ENCODE measurements at regions of chr5 and their contacts with region 1.

Region 1: DNA sequence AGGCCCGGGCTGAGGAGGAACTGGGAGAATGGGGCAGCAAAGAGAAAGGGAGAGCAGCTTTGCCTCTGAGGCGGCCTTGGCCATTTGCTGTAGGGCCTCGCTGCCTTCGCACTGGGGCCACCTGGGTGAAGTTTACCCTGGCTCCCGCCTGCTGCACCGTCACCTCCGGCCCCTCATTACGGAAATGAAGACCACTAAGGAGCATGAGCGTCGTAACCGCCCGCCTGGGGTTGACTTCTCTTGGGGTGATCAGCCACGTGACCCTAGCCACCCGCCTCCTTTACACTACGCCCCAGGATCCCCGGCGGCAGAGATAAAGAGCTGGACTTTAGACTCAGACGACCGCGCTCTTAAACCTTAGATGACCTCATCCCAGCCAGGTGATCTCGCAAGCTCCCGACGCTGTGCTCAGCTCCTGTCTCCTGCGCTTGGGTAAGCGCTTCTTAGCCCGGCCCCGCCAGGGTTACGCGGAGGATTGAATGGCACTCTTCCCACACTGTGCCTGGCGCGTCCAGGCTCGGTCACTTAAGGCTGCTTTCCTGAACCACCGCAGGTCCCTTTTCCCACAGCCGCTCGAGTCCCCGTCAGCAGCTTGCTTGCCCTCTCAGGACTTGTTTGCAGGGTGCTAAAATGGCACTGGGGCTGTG is 107.9 kb upstream of the LARP1 start:
- DNase-seq: peak; percentile 53
- ATAC-seq: peak; percentile 61
- H3K4me3 ChIP-seq: peak overlapping the region in 4 of 5 experiments; percentile 37 to 74 (median 57)
- H3K4me3 Mint-ChIP-seq: peak overlapping the region; percentile 93
- H3K27ac ChIP-seq: no peak overlapping the region
- H3K27ac Mint-ChIP-seq: peak overlapping the region; percentile 77
- H3K4me1 ChIP-seq: peaks cover 14 to 15% of the 10 kb centered on the region in 2 donors
- H3K4me1 Mint-ChIP-seq: peaks cover 15% of the 10 kb centered on the region
- H3K27me3 ChIP-seq: peaks cover 0 to 16% (median 2%) of the 10 kb centered on the region in 4 experiments
- H3K27me3 Mint-ChIP-seq: peaks cover 22% of the 10 kb centered on the region
- CTCF ChIP-seq: no peak

Region 2: DNA sequence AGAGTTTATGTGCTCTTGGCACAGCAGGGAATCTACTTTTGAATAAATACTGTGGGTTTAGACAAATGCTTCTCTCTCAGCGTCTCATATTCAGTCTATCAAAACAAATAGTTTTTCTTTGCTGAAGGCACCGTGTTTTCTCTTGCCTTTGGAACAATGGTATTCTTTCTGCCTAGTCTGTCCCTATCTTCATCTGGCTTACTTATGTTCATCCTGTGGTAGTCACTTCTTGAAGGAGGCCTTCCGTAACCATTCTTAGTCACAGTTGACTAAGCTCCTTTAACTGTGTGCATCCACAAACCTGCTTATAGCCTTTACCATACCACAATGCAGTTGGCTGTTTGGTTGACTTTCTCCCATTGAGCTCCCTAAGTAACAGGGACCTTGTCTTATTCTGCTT is 153.8 kb after region 1 on chr5:
- CTCF ChIA-PET with region 1: interaction called, 11 read pairs
- POLR2A ChIA-PET with region 1: no interaction called
- intact Hi-C with region 1: no loop called
- DNase-seq: no peak
- ATAC-seq: no peak
- H3K4me3 ChIP-seq: no peak overlapping the region
- H3K4me3 Mint-ChIP-seq: no peak overlapping the region
- H3K27ac ChIP-seq: no peak overlapping the region
- H3K27ac Mint-ChIP-seq: no peak overlapping the region
- H3K4me1 ChIP-seq: no peaks in the 10 kb centered on the region
- H3K4me1 Mint-ChIP-seq: no peaks in the 10 kb centered on the region
- H3K27me3 ChIP-seq: no peaks in the 10 kb centered on the region
- H3K27me3 Mint-ChIP-seq: no peaks in the 10 kb centered on the region
- CTCF ChIP-seq: no peak

Region 3: GRCh38 chr5:154811653-154812365 is 164.6 kb after region 1 on chr5:
- CTCF ChIA-PET with region 1: interaction called, 84 read pairs
- POLR2A ChIA-PET with region 1: interaction called, 10 read pairs
- intact Hi-C with region 1: loop called (anchors 1 kb)
- DNase-seq: peak; percentile 75
- ATAC-seq: peak; percentile 82
- H3K4me3 ChIP-seq: no peak overlapping the region
- H3K4me3 Mint-ChIP-seq: no peak overlapping the region
- H3K27ac ChIP-seq: peak overlapping the region in 1 of 2 donors; percentile 41
- H3K27ac Mint-ChIP-seq: peak overlapping the region; percentile 50
- H3K4me1 ChIP-seq: peaks cover 21 to 25% of the 10 kb centered on the region in 2 donors
- H3K4me1 Mint-ChIP-seq: peaks cover 20% of the 10 kb centered on the region
- H3K27me3 ChIP-seq: no peaks in the 10 kb centered on the region
- H3K27me3 Mint-ChIP-seq: no peaks in the 10 kb centered on the region
- CTCF ChIP-seq: peak; percentile 97

Region 4: DNA sequence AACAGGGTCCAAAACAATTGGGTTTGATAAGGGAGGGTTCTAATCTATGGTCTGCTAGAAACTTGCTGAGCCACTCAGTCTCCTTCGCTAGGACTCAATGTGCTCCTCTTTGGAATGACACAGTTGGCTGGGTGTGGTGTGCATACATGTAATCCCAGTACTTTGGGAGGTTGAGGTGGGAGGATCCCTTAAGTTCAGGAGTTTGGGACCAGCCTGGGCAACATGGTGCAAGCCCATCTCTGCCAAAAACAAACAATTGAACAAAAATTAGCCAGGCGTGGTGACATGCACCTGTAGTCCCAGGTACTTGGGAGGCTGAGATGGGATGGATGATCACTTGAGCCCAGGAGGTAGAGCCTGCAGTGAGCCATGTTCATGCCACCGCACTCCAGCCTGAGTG is 363.6 kb after region 1 on chr5:
- CTCF ChIA-PET with region 1: no interaction called
- POLR2A ChIA-PET with region 1: no interaction called
- intact Hi-C with region 1: no loop called
- DNase-seq: no peak
- ATAC-seq: no peak
- H3K4me3 ChIP-seq: no peak overlapping the region
- H3K4me3 Mint-ChIP-seq: no peak overlapping the region
- H3K27ac ChIP-seq: no peak overlapping the region
- H3K27ac Mint-ChIP-seq: no peak overlapping the region
- H3K4me1 ChIP-seq: no peaks in the 10 kb centered on the region
- H3K4me1 Mint-ChIP-seq: no peaks in the 10 kb centered on the region
- H3K27me3 ChIP-seq: no peaks in the 10 kb centered on the region
- H3K27me3 Mint-ChIP-seq: peaks cover 30% of the 10 kb centered on the region
- CTCF ChIP-seq: no peak

Measured in B cell (primary cell).